ENCODE measurements at regions of chr1 and their contacts with region 1.

Region 1: DNA sequence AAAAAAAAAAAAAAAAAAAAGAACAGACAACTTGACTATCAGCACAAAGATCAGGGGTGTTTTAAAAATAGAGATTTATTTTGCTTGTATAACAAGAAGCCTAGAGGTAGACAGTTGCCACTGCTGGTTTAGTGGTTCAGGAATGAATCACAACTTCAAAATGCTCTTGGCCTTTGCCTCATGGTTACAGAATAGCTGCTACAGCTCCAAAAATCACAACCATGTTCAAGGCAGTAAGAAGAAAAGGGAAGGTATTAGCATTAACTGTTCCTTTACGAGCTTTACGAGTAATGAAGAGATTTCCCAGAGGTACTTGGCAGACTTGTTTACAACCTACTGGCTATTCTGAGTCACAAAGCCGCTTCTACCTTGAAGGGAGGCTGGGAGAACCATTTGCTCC is 52.5 kb upstream of the PPM1J start:
- DNase-seq: no peak
- H3K4me3 ChIP-seq: no peak overlapping the region
- H3K27ac ChIP-seq: no peak overlapping the region
- H3K4me1 ChIP-seq: peaks cover 3% of the 10 kb centered on the region
- H3K27me3 ChIP-seq: peaks cover 63% of the 10 kb centered on the region
- CTCF ChIP-seq: no peak

Region 2: GRCh38 chr1:112688781-112689193 is 78.9 kb before region 1 on chr1:
- CTCF ChIA-PET with region 1: no interaction called
- POLR2A ChIA-PET with region 1: no interaction called
- intact Hi-C with region 1: no loop called
- DNase-seq: no peak
- H3K4me3 ChIP-seq: no peak overlapping the region
- H3K27ac ChIP-seq: no peak overlapping the region
- H3K4me1 ChIP-seq: no peaks in the 10 kb centered on the region
- H3K27me3 ChIP-seq: no peaks in the 10 kb centered on the region
- CTCF ChIP-seq: no peak

Region 3: GRCh38 chr1:113488576-113489177 is 721.0 kb after region 1 on chr1:
- CTCF ChIA-PET with region 1: interaction called, 15 read pairs
- POLR2A ChIA-PET with region 1: no interaction called
- intact Hi-C with region 1: no loop called
- DNase-seq: peak; percentile 64
- H3K4me3 ChIP-seq: no peak overlapping the region
- H3K27ac ChIP-seq: no peak overlapping the region
- H3K4me1 ChIP-seq: no peaks in the 10 kb centered on the region
- H3K27me3 ChIP-seq: no peaks in the 10 kb centered on the region
- CTCF ChIP-seq: peak; percentile 65

Measured in A673 (cell line).